ENCODE measurements at regions of chr6 and their contacts with region 1.

Region 1: GRCh38 chr6:42166444-42167141 is 6.6 kb upstream of the GUCA1A start:
- DNase-seq: peak; percentile 48
- H3K4me3 ChIP-seq: no peak overlapping the region
- H3K27ac ChIP-seq: no peak overlapping the region
- H3K4me1 ChIP-seq: peaks cover 11% of the 10 kb centered on the region
- H3K27me3 ChIP-seq: no peaks in the 10 kb centered on the region

Region 2: GRCh38 chr6:42075159-42075838 is 91.3 kb before region 1 on chr6:
- in situ Hi-C with region 1: loop called (anchors 5 kb)
- DNase-seq: peak; percentile 78
- H3K4me3 ChIP-seq: no peak overlapping the region
- H3K27ac ChIP-seq: no peak overlapping the region
- H3K4me1 ChIP-seq: no peaks in the 10 kb centered on the region
- H3K27me3 ChIP-seq: no peaks in the 10 kb centered on the region